HepG2 (cell line): ENCODE measurements at regions of chr18 and their contacts with region 1.

Region 1: DNA sequence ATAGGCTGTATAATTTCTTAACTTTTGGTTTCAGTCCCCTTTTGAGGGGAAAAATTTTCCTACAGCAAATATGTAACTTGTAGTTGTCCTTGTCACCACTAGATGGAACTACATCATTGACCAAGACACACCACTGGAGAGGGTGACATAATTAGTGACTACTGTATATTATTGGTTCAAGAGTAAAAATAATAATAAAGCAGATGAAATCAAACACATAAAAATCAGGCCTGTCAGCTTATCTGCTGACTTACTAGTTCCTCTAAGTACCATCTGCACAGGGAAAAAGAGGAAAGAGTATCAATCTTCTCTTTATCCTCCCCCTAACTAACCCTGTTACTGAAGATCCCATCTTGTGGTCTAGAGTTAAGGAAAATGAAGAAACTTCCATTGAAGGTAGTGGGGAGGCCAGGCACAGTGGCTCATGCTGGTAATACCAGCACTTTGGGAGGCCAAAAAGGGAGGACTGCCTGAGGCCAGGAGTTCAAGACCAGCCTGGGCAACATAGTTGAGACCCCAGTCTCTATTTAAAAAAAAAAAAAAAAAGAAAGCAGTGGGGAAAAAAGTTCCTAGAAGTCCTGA is 29.6 kb upstream of the ENOSF1 start:
- DNase-seq: peak; percentile 36
- ATAC-seq: peak; percentile 77
- H3K4me3 ChIP-seq: no peak overlapping the region
- H3K27ac ChIP-seq: no peak overlapping the region
- H3K4me1 ChIP-seq: no peaks in the 10 kb centered on the region
- H3K27me3 ChIP-seq: no peaks in the 10 kb centered on the region; a peak in 1 of 5 replicates
- CTCF ChIP-seq: peak; percentile 75
- EP300 ChIP-seq: no peak
- POLR2A ChIP-seq: no peak
- RAD21 ChIP-seq: peak; percentile 74

Region 2: GRCh38 chr18:839224-840022 is 97.4 kb after region 1 on chr18:
- CTCF ChIA-PET with region 1: interaction called, 34 read pairs
- POLR2A ChIA-PET with region 1: no interaction called
- in situ Hi-C with region 1: loop called (anchors 5 kb)
- intact Hi-C with region 1: no loop called
- DNase-seq: peak; percentile 69
- ATAC-seq: peak; percentile 96
- H3K4me3 ChIP-seq: peak overlapping the region; percentile 44 to 58 (median 46); a peak in 5 of 6 replicates
- H3K27ac ChIP-seq: no peak overlapping the region
- H3K4me1 ChIP-seq: peaks cover 54% of the 10 kb centered on the region
- H3K27me3 ChIP-seq: 0 out of 5 replicates have a peak, but pooled peaks cover 0 to 3% of the 10 kb centered on the region in 2 experiments
- CTCF ChIP-seq: peak; percentile 79
- EP300 ChIP-seq: no peak
- POLR2A ChIP-seq: no peak
- RAD21 ChIP-seq: peak; percentile 70; the same call in 1 of the 2 replicates

Region 3: GRCh38 chr18:911025-911424 is 169.0 kb after region 1 on chr18:
- CTCF ChIA-PET with region 1: no interaction called
- POLR2A ChIA-PET with region 1: no interaction called
- in situ Hi-C with region 1: no loop called
- intact Hi-C with region 1: no loop called
- DNase-seq: no peak
- ATAC-seq: no peak
- H3K4me3 ChIP-seq: no peak overlapping the region
- H3K27ac ChIP-seq: no peak overlapping the region
- H3K4me1 ChIP-seq: no peaks in the 10 kb centered on the region
- H3K27me3 ChIP-seq: peaks cover 2 to 42% of the 10 kb centered on the region in 2 experiments
- CTCF ChIP-seq: no peak
- EP300 ChIP-seq: no peak
- POLR2A ChIP-seq: no peak
- RAD21 ChIP-seq: no peak